Head of caudate nucleus (tissue), 42 donors: ENCODE measurements at regions of chr9 and their contacts with region 1.

Region 1: DNA sequence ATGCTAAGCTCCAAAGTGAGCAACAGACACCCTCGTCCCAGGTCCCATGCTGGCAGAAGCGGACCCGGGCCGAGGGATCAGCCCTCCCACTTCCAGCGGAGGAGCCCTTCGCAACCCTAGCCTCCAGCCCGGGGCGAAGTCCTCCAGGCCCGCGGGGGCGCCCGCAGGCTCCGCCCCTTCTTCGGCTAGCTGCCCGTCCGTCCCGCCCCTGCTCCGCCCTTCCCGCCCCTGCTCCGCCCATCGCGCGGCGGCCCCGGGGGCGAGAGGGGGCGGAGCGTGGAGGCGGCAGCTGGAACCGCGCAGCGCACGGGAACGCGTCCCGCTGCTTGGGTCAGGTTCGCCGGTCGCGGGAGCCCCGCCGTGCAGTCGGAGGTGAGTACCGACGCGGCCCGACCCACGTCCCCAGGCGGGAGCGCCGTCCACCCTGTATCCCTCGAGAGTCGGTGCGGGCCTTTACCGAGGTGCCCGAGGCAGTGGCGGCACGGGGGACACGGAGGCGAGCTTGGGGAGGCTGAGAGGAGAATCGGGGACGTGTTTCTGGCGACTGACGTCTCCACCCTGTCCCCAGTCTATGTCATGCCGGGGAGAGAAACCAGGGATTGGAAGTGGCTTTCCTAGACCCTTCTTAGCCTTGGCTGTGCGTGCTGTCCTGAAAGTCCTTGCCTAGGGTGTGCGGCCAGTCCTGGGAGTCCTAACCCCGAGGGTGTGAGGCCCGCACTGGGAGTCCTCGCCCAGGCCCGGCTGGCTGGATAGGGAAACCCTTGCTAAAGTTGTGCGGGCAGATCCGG is at the start of gene ACO1:
- DNase-seq: peak; percentile 58 to 94 (median 88)

Region 2: DNA sequence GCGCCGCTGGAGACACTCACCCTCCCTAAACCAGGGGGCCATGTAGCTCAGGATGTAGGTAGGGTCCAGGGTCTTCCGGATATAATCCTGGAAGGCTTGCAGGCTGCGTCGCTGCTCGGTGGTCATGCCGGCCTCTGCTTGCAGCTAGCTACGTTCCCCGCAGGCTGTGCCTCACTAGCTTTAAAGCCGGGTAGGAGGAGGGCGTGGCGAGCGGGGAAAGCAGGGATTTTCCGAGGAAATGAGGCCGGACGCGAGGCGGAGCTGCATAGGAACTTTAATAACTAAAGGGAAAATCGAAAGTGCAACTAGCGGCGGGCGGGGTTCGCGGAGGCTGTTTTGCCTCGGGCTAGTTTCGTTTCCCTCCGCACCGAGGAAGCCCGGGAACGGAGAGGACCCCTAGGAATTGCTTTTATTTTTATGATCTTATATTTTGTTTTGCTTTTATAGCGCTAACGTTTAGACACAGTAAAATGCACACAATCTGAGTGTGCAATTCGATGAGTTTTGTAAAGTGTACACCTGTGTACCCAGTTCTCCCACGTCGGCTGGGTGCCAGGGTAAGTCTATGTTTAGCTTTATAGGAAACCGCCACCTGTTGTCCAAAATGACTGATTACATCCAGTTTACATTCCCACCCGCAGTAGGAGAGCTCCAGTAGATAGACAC is 141.6 kb after region 1 on chr9 and contains the start of gene RIGI:
- intact Hi-C with region 1: loop called (anchors 10 kb)
- DNase-seq: peak; percentile 77 to 96 (median 88)

Region 3: DNA sequence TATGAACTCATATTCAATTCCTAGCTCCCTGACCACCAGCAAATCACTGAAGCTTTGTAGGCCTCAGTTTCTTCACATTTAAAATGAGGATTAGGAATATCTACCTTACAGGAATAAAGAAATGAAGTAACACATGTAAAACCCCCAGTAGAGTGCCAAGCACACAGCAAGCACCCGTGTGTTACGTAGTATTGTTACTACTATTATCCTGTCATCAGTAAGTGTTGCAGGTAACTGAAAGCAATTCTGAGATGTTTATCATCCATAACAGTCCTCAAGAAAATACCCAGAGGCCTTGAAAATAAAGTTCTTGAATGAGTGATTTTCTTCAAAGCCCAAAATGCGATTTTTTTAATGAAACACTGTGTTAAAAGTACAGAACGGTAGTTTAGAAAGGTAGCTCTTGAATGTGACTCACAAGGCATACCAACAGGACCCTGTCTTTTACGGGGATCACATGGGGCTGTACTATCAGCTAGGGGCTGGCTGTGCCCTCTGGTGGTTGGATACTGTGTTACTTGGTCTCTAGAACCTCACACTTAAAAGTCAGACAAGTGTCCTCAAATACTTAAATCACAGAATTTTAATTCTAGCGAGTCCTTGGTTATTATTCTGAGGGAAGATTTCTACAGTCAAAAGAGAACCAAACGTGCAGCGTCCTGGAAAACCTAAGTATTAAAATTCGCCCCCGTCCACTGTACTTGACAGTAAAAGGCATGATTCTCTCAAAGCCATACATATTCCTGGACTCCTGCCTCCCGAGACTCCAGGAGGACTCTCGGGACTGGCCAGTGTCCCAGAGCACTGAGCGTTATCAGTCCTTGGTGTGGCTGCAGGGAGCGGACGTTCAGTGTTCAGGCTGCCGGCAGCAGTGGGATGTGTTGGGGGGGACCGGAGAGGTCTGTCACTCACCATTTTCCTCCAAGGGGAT is 187.7 kb after region 1 on chr9:
- intact Hi-C with region 1: loop called (anchors 5 kb)
- DNase-seq: peak; percentile 27 to 90 (median 73)